ENCODE measurements at regions of chr11 and their contacts with region 1.

Region 1: DNA sequence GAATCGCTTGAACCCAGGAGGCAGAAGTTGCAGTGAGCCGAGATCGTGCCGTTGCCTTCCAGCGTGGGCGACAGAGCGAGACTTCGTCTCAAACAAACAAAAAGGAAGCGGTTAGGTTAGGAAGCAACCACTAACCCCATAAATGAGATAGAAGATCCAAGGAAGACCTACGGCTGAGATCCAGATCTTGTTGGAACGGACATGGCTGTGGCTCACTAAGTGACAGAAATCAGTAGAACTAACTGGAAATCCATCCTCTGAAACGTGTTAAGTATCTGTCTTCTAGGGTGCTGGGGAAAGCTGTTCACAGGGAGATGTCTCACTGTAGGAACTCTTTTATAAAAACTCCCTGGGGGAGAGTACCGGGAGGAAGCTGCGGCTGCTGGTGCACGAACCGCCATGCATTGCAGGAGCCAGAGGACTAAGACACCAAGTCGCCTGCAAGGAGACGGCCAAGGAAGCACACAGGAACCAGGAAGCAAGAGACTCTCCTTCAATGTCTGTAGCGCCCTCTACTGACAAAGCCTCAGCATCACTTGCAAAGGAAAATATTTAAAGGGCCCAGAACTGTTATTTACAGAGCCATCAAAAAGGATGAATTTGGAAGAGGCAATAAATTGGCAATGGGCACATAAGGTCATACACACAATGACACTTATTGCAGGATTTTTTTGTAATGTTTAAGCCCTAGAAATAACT is 16.9 kb upstream of the SPTY2D1 start:
- DNase-seq: no peak
- ATAC-seq: no peak
- H3K4me3 Mint-ChIP-seq: peak overlapping the region; percentile 28
- H3K27ac Mint-ChIP-seq: no peak overlapping the region
- H3K4me1 Mint-ChIP-seq: peaks cover 4% of the 10 kb centered on the region
- H3K27me3 Mint-ChIP-seq: no peaks in the 10 kb centered on the region
- CTCF ChIP-seq: no peak

Region 2: GRCh38 chr11:18540207-18541009 is 110.6 kb before region 1 on chr11:
- CTCF ChIA-PET with region 1: interaction called, 8 read pairs
- POLR2A ChIA-PET with region 1: no interaction called
- intact Hi-C with region 1: loop called (anchors 1 kb)
- DNase-seq: no peak
- ATAC-seq: peak; percentile 21
- H3K4me3 Mint-ChIP-seq: no peak overlapping the region
- H3K27ac Mint-ChIP-seq: no peak overlapping the region
- H3K4me1 Mint-ChIP-seq: no peaks in the 10 kb centered on the region
- H3K27me3 Mint-ChIP-seq: no peaks in the 10 kb centered on the region
- CTCF ChIP-seq: no peak